Activated B cell treated with CpG ODN at 0.5 μM for 24 hours (primary cell): ENCODE measurements at regions of chrX and their contacts with region 1.

Region 1: DNA sequence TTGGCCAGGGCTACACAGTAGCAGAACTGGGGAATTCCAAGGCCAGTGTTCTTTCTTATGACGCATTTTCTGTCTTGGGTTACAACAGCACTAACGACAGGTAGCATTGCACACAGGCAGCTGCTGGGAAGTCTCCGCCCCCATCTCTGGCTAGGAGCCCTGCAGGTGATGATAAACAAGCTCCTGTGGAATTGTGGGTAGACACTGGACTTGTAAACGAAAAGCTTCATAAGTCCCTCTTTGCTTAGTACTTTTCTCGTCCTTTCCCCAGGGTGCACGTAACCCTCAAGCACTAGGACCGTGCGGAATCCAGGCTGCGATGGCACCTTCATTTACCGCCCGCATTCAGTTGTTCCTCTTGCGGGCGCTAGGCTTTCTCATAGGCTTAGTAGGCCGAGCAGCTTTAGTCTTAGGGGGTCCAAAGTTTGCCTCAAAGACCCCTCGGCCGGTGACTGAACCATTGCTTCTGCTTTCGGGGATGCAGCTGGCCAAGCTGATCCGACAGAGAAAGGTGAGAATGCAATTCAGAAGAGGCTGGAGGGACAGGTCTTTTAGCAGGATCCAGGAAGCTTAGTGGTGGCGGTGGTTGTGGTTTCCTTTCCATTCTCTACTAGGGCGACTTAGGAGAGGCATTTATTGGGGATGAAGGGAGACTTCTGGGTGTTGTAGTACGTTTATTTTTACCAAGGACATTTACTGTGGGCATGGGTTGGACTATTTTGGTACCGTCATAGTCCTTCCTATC is at the start of gene FAAH2:
- DNase-seq: peak; percentile 15
- ATAC-seq: peak; percentile 80
- H3K4me3 Mint-ChIP-seq: peak within 1 kb of the TSS; percentile 75
- H3K27ac Mint-ChIP-seq: peak within 1 kb of the TSS; percentile 30
- H3K4me1 Mint-ChIP-seq: peaks cover 12% of the 10 kb centered on the region
- H3K27me3 Mint-ChIP-seq: no peaks in the 10 kb centered on the region
- CTCF ChIP-seq: no peak
- total RNA-seq, gene FAAH2: 2.8 and 3.1 TPM in 2 replicates

Region 2: GRCh38 chrX:56813318-56813837 is 473.3 kb before region 1 on chrX:
- CTCF ChIA-PET with region 1: no interaction called
- POLR2A ChIA-PET with region 1: no interaction called
- intact Hi-C with region 1: loop called (anchors 5 kb)
- DNase-seq: no peak
- ATAC-seq: peak; percentile 39
- H3K4me3 Mint-ChIP-seq: peak overlapping the region; percentile 78
- H3K27ac Mint-ChIP-seq: peak overlapping the region; percentile 93
- H3K4me1 Mint-ChIP-seq: peaks cover 69% of the 10 kb centered on the region
- H3K27me3 Mint-ChIP-seq: no peaks in the 10 kb centered on the region
- CTCF ChIP-seq: no peak

Region 3: DNA sequence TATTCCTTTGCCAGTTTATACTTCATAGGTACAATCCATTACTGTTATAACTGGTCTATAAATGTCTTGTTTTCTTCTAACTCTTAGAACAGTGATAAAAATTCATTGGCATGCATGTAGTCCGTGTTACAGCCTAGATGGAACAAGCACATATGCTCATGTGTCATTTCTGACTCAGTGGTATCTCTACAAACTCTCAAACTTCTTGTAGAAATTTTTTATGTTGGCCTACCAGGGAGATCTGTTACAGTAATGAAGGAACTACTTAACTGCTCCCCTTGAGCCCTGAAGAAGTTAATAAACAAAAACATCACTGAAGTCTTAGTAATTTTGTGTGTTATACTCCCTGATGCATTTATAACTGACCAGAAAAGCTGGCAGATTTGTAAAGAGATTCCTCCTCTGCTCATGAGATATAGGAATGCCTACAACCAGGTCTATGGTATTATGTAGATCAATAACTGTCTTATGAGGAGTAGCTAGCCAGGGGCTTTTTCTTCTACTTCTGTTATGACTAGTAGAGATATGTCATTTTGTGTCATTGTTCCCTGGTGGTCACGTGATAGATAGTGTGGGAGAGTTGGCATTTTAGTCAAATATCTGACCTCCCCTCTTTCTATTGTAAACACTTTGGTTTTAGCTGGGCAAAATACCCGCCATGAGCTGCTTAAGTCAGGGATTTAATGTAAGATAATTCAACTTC is 53.9 kb before region 1 on chrX:
- CTCF ChIA-PET with region 1: no interaction called
- POLR2A ChIA-PET with region 1: no interaction called
- intact Hi-C with region 1: no loop called
- DNase-seq: no peak
- ATAC-seq: no peak
- H3K4me3 Mint-ChIP-seq: no peak overlapping the region
- H3K27ac Mint-ChIP-seq: no peak overlapping the region
- H3K4me1 Mint-ChIP-seq: no peaks in the 10 kb centered on the region
- H3K27me3 Mint-ChIP-seq: no peaks in the 10 kb centered on the region
- CTCF ChIP-seq: no peak

Region 4: GRCh38 chrX:57453901-57454300 is 167.2 kb after region 1 on chrX:
- CTCF ChIA-PET with region 1: no interaction called
- POLR2A ChIA-PET with region 1: no interaction called
- intact Hi-C with region 1: loop called (anchors 2 kb)
- DNase-seq: no peak
- ATAC-seq: no peak
- H3K4me3 Mint-ChIP-seq: no peak overlapping the region
- H3K27ac Mint-ChIP-seq: no peak overlapping the region
- H3K4me1 Mint-ChIP-seq: no peaks in the 10 kb centered on the region
- H3K27me3 Mint-ChIP-seq: no peaks in the 10 kb centered on the region
- CTCF ChIP-seq: no peak